ENCODE measurements at regions of chr7 and their contacts with region 1.

Region 1: GRCh38 chr7:116271963-116272839 is 61.9 kb downstream of the TES start:
- DNase-seq: peak; percentile 93
- H3K4me3 ChIP-seq: peak overlapping the region; percentile 7; the same call in 1 of the 2 replicates
- H3K27ac ChIP-seq: peak overlapping the region; percentile 79
- H3K27me3 ChIP-seq: no peaks in the 10 kb centered on the region
- CTCF ChIP-seq: no peak

Region 2: DNA sequence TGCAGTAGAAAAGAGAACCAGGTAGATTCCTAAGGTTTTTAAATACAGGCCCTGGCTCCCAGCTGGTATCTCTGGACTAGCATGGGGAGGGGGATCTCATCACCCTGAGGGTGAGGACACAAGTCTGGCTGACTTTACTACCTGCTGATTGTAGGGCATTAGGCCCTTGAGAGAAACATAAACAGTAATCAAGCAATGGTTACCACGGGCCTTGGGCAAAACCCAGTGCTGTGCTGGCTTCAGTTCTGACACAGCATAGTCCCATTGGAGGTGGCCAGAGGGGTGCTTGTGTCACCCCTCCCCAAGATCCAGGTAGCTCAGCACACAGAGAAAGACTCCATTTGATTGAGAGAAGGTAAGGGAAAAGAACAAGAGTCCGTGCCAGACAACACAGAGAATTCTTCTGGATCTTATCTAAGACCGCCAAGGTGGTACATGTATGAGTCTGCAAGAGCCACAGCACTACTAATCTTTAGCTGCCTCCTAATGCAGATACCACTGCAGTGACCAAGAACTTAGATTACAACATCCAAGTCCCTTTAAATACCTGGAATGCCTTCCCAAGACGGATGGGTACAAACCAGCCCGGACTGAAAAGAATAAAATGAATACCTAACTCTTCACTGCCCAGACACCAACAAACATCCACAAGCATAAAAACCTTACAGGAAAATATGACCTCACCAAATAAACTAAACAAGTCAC is 275.1 kb before region 1 on chr7:
- CTCF ChIA-PET with region 1: no interaction called
- POLR2A ChIA-PET with region 1: no interaction called
- DNase-seq: no peak
- H3K4me3 ChIP-seq: no peak overlapping the region
- H3K27ac ChIP-seq: no peak overlapping the region
- H3K27me3 ChIP-seq: no peaks in the 10 kb centered on the region
- CTCF ChIP-seq: no peak

Region 3: DNA sequence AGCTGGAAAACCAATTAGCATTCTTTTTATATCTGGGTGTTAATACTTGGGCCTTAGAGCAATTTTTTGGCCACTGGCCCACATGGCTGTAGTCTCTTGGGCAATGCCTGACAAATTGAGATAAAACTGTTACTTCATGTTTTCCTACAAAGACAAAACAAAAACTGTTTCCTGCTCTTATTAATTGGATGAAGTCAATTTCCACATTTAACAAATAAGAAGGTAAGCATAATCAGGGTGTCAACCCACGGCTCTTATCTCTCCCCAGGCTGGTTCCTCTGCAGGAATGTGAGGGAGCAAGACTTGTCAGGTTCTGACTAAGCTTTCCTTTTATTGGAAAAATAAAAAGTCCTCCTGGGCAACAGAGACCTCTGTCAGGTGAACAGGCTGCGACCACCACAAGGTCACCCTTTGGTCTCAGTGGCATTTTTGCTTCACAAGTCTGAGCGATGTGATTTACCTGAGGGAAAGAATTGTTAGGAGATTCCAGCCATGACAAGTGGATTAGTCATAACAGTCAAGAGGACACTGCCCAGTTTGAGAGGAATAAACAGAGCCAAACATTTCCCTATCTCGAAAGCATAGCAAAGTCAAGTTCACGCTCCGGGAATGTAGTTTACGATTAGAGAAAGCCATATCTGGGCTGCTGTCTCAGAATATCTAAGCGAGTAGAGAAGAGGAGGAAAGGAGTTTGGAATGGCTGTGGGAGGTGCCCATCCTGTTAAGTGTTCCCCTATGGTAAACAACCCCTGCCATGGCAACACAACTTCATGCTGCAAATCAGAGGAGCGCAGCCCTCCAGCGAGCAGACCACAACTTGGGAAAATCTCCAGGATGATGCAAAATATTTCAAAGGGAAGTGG is 82.6 kb after region 1 on chr7:
- CTCF ChIA-PET with region 1: no interaction called
- POLR2A ChIA-PET with region 1: interaction called, 13 read pairs
- DNase-seq: peak; percentile 94
- H3K4me3 ChIP-seq: peak overlapping the region; percentile 44
- H3K27ac ChIP-seq: peak overlapping the region; percentile 96
- H3K27me3 ChIP-seq: no peaks in the 10 kb centered on the region
- CTCF ChIP-seq: no peak

Region 4: DNA sequence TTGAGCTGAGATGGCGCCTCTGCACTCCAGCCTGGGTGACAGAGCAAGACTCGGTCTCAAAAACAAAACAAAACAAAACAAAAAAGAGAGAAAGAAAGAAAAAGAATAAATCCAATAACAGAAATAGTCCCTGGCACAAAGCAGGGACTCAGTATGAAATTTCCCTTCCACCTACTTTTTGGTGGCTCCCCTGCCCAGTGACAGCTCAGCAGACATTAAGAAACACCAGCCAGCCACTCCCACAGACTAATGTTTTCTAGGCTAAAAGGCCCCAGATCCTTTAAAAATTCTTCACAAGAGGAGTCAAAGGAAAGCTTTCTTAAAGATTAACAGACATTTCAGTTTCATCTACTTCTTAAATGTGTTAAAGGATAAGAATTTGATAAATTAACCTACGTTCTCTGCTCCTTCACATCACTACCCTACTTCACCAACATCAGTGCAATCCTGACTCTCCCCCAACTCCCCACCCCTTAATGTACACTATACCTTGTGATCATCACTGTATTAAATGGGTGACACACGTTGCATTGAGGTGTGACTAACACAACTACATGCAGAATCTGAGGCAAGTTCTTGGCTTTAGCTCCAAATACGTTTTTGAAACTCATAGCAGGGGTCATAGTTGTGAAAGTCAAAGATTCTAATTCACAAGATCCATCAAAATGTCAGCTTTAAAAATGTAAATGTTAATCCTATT is 112.9 kb after region 1 on chr7:
- CTCF ChIA-PET with region 1: no interaction called
- POLR2A ChIA-PET with region 1: no interaction called
- DNase-seq: no peak
- H3K4me3 ChIP-seq: no peak overlapping the region
- H3K27ac ChIP-seq: no peak overlapping the region
- H3K27me3 ChIP-seq: no peaks in the 10 kb centered on the region
- CTCF ChIP-seq: no peak

Region 5: GRCh38 chr7:116443101-116443523 is 170.9 kb after region 1 on chr7:
- CTCF ChIA-PET with region 1: interaction called, 3 read pairs
- POLR2A ChIA-PET with region 1: interaction called, 10 read pairs
- DNase-seq: peak; percentile 82
- H3K4me3 ChIP-seq: no peak overlapping the region
- H3K27ac ChIP-seq: peak overlapping the region; percentile 55
- H3K27me3 ChIP-seq: no peaks in the 10 kb centered on the region
- CTCF ChIP-seq: no peak